ENCODE measurements at regions of chr2 and their contacts with region 1.

Region 1: GRCh38 chr2:176126929-176127773 is 2.4 kb upstream of the HOXD8 start:
- DNase-seq: peak; percentile 91
- H3K4me3 ChIP-seq: no peak overlapping the region
- H3K27ac ChIP-seq: peak overlapping the region; percentile 93 to 98
- H3K4me1 ChIP-seq: peaks cover 12% of the 10 kb centered on the region
- H3K27me3 ChIP-seq: no peaks in the 10 kb centered on the region
- CTCF ChIP-seq: peak; percentile 95 to 97 (median 96)
- POLR2A ChIP-seq: no peak

Region 2: DNA sequence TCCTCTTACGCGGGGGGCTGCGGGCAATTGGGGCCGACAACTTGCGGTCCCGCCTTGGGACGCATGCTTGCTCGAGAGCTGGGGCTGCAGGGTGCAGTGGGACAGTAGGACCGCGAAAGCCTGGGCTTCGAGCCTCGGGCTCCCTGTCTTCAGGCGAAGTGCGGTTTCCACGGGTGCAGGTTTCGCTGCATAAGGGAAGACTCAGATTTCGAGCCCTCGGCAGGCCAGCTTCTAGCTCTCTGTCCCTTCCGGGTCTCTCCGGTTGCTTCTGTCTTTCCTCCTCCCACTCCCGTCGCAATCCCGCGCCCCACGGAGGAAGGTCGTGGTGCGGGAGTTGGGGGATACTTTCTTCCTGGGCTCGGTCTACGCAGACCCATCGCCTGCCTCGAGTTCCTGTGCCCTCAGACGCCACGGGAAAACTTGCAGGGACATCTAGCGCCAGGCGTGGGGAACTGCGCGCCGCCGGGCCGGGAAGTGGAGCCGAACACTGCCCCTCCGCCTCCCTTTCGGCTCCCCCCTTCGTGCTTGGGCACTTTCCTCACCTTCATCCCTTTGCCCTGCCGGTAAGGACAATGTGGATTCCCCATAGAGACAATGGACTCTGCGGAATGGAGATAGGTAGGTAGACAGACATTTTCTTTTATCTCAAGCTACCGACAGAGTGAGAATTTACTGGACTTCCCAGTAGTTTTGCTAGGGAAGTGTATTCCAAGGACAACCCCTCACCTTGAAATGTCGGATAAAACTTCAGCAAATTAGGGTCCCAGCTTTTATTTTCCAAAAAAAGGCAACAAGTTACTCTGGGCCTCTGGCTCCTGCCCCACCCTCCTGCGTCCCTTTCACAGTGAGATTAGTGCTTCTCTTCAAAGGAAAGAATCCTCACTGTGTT is 38.9 kb before region 1 on chr2:
- intact Hi-C with region 1: no loop called
- DNase-seq: peak; percentile 75
- H3K4me3 ChIP-seq: no peak overlapping the region
- H3K27ac ChIP-seq: no peak overlapping the region
- H3K4me1 ChIP-seq: peaks cover 11% of the 10 kb centered on the region
- H3K27me3 ChIP-seq: no peaks in the 10 kb centered on the region
- CTCF ChIP-seq: peak; percentile 24 to 81 (median 61)
- POLR2A ChIP-seq: no peak

Region 3: DNA sequence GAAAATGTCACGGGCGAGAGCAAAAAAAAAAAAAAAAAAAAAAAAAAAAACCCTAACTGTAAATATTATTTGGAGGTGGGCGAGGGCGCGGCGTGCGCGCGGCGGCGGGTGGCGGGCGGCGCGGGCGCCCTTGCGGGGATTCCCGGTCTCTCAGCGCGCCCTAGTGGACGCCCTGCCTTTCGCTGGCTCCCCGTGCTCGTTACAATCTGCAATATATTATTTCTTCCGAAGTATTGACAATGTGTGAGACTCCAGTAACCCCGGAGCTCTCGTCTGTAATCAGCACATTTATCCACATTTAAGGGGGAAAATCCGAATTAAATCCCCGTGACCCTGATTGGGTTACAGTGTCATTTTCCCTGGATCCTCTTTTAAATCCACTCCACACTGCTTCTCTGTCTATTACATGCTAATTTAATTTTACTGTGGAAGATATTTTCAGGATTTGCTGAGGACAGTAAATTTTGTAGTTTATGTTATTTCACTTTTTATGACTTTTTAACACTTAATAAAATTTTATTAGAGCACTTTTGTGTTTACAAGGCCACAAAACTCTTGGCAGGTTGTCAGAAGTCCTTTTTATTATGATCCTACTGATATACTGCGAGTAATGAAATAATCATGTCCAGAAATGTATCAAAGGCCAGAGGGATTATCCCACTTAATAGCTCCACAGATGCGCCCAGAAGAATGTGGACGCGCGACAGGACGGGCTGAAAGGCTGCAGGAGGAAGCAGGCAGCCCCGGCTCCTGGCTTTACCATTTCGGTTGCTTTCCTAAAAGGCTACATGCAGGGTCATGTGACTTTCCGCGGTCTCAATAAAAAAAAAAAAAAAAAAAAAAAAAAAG is 511.2 kb after region 1 on chr2:
- intact Hi-C with region 1: loop called (anchors 5 kb)
- DNase-seq: peak; percentile 82
- H3K4me3 ChIP-seq: peak overlapping the region; percentile 78 to 81
- H3K27ac ChIP-seq: peak overlapping the region; percentile 89 to 92
- H3K4me1 ChIP-seq: peaks cover 6% of the 10 kb centered on the region
- H3K27me3 ChIP-seq: no peaks in the 10 kb centered on the region
- CTCF ChIP-seq: peak; percentile 72 to 82 (median 75)
- POLR2A ChIP-seq: no peak

Region 4: DNA sequence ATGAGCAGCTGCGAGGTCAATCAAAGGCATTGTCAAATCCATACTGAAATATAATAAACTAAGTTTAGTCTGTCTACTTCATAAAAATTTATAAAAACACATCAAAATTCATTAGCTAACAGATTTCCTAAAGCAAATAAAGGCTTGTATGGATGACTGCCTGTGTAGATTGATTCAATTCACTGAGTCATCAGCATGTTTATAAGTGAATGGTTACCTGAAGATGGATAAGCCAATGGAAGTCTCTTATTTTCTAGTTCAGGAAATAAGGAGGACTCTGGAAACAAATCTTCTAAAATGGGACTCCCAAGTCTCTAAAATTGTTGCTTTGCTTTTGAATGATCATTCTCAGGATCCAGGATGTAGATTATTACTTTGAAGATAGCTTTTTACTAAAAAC is 1028.5 kb after region 1 on chr2:
- intact Hi-C with region 1: loop called (anchors 10 kb)
- DNase-seq: no peak
- H3K4me3 ChIP-seq: no peak overlapping the region
- H3K27ac ChIP-seq: no peak overlapping the region
- H3K4me1 ChIP-seq: no peaks in the 10 kb centered on the region
- H3K27me3 ChIP-seq: no peaks in the 10 kb centered on the region
- CTCF ChIP-seq: no peak
- POLR2A ChIP-seq: no peak

Measured in testis (tissue), 5 donors.